PC-9 (cell line): ENCODE measurements at regions of chr11 and their contacts with region 1.

Region 1: GRCh38 chr11:12248338-12248737 is 129.0 kb upstream of the PARVA start:
- DNase-seq: peak; percentile 88 to 97
- H3K4me3 ChIP-seq: no peak overlapping the region
- H3K27ac ChIP-seq: peak overlapping the region; percentile 59
- H3K4me1 ChIP-seq: peaks cover 62% of the 10 kb centered on the region
- H3K27me3 ChIP-seq: no peaks in the 10 kb centered on the region
- CTCF ChIP-seq: no peak

Region 2: DNA sequence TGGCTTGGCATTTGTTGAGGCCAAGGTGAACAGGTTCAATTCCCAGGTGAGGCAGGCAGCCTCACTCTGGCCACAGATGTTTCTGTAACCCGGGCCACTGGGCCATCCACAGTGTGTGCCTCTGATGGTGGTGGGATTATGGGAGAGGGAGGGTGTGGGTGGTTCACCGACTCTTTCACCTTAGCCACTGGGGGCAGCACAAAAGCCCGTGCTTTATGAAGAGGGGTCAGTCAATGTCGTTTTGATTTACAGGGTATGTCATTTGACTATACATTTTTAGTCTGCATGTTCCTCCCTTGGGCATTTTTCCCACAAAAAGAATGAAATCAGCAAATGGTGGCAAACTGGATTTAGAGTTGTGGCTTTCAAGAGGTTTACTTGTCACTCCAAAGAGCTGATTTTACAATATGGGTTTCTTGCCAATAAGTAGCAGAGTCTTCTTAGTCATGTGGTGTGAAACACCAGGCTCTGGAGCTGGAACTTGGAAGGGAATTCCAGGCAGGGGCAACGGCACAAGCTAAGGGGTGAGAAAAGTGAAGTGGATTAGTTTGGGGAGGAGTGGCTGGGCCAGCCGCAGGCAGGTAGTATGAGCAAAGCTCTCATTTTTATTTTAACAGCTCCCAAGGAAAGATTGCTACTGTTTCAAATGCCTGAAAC is 1172.7 kb before region 1 on chr11:
- CTCF ChIA-PET with region 1: no interaction called
- POLR2A ChIA-PET with region 1: interaction called, 18 read pairs
- intact Hi-C with region 1: no loop called
- DNase-seq: no peak
- H3K4me3 ChIP-seq: no peak overlapping the region
- H3K27ac ChIP-seq: no peak overlapping the region
- H3K4me1 ChIP-seq: no peaks in the 10 kb centered on the region
- H3K27me3 ChIP-seq: peaks cover 37% of the 10 kb centered on the region
- CTCF ChIP-seq: no peak

Region 3: DNA sequence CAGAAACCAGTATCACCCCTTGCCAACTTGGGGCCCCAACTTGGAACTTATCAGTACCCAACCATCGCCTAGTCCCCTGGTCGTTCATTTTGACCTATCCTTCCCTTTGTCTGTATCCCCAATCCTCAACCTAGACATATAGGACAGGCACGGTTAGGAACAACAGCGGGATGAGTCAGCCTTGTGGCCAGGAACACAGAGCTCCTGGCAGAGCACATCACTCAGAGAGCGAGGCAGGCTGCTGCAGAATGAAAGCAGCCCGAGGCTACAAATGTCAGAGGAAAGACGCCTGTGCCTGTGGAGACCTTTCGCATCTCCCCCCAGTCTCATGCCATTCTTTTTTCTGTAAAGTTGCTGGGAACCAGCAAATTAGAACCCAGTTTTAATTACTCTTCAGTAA is 254.5 kb before region 1 on chr11:
- CTCF ChIA-PET with region 1: no interaction called
- POLR2A ChIA-PET with region 1: no interaction called
- intact Hi-C with region 1: no loop called
- DNase-seq: peak; percentile 63 to 78
- H3K4me3 ChIP-seq: no peak overlapping the region
- H3K27ac ChIP-seq: no peak overlapping the region
- H3K4me1 ChIP-seq: peaks cover 35% of the 10 kb centered on the region
- H3K27me3 ChIP-seq: no peaks in the 10 kb centered on the region
- CTCF ChIP-seq: no peak

Region 4: GRCh38 chr11:12066799-12067508 is 181.4 kb before region 1 on chr11:
- CTCF ChIA-PET with region 1: no interaction called
- POLR2A ChIA-PET with region 1: no interaction called
- intact Hi-C with region 1: loop called (anchors 5 kb)
- DNase-seq: peak; percentile 41 to 85
- H3K4me3 ChIP-seq: peak overlapping the region; percentile 26; the same call in 1 of the 2 replicates
- H3K27ac ChIP-seq: peak overlapping the region; percentile 94
- H3K4me1 ChIP-seq: peaks cover 39% of the 10 kb centered on the region
- H3K27me3 ChIP-seq: no peaks in the 10 kb centered on the region
- CTCF ChIP-seq: no peak

Region 5: GRCh38 chr11:12224537-12224893 is 23.8 kb before region 1 on chr11:
- CTCF ChIA-PET with region 1: interaction called, 4 read pairs
- POLR2A ChIA-PET with region 1: no interaction called
- intact Hi-C with region 1: loop called (anchors 1 kb)
- DNase-seq: peak; percentile 78 to 79
- H3K4me3 ChIP-seq: peak overlapping the region; percentile 41; the same call in 1 of the 2 replicates
- H3K27ac ChIP-seq: peak overlapping the region; percentile 94
- H3K4me1 ChIP-seq: peaks cover 70% of the 10 kb centered on the region
- H3K27me3 ChIP-seq: no peaks in the 10 kb centered on the region
- CTCF ChIP-seq: no peak